ENCODE measurements at regions of chr4 and their contacts with region 1.

Region 1: DNA sequence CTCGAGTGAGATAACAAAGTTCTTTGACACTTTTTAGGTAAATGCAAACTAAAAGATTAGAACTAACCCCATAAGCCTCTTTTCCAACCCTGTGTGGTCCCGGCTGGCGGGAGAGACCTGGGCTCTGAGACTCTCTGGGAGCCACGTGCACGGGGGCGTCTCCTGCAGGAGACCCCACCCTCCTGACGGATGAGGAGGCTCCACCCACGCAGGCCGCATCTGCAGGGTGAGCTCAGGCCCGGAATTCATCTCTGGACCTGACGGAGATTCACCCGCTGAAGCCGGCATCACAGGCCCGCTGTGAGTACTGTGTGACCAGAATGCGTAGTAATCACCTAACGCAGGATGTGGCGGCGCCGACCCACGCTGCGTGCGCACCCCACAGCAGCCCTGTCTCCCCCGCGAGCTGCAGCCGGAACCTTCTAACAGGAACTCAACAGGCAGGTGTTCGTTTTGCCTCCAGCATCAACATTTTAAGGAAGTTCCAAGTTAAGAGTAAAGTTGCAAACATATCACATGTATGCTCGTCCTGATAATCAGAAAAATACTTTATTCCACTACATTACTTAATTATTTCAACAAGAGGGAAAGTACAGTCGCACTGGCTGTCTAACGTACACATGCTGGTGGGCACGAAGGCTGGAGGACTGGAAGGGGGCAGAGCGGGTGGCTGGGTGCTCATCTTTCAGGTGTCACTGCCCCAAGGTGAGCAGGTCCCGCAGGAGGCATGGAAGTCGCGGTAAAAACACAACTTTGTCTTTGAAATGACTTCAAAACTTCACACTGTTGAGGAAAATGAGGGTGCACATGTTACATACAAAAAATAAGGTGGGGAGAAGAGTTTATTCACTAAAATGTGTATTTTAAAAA is 44.5 kb downstream of the FGFRL1 start:
- DNase-seq: peak; percentile 95
- ATAC-seq: peak; percentile 97
- H3K4me3 ChIP-seq: peak overlapping the region; percentile 36 to 66 (median 51)
- H3K4me3 Mint-ChIP-seq: peak overlapping the region; percentile 70
- H3K27ac ChIP-seq: peak overlapping the region; percentile 73 to 76
- H3K27ac Mint-ChIP-seq: peak overlapping the region; percentile 84
- H3K4me1 ChIP-seq: peaks cover 11 to 17% of the 10 kb centered on the region in 2 donors
- H3K4me1 Mint-ChIP-seq: peaks cover 10% of the 10 kb centered on the region
- H3K27me3 ChIP-seq: peaks cover 0 to 19% (median 3%) of the 10 kb centered on the region in 4 experiments
- H3K27me3 Mint-ChIP-seq: peaks cover 10% of the 10 kb centered on the region
- CTCF ChIP-seq: no peak

Region 2: GRCh38 chr4:985123-985830 is 70.7 kb before region 1 on chr4:
- CTCF ChIA-PET with region 1: no interaction called
- POLR2A ChIA-PET with region 1: no interaction called
- intact Hi-C with region 1: no loop called
- DNase-seq: peak; percentile 58
- ATAC-seq: peak; percentile 37
- H3K4me3 ChIP-seq: peak overlapping the region in 4 of 5 experiments; percentile 26 to 46 (median 42)
- H3K4me3 Mint-ChIP-seq: peak overlapping the region; percentile 91
- H3K27ac ChIP-seq: no peak overlapping the region
- H3K27ac Mint-ChIP-seq: peak overlapping the region; percentile 26
- H3K4me1 ChIP-seq: peaks cover 25 to 26% of the 10 kb centered on the region in 2 donors
- H3K4me1 Mint-ChIP-seq: peaks cover 23% of the 10 kb centered on the region
- H3K27me3 ChIP-seq: no peaks in the 10 kb centered on the region
- H3K27me3 Mint-ChIP-seq: no peaks in the 10 kb centered on the region
- CTCF ChIP-seq: no peak

Region 3: GRCh38 chr4:1026115-1026514 is 29.8 kb before region 1 on chr4:
- CTCF ChIA-PET with region 1: no interaction called
- POLR2A ChIA-PET with region 1: no interaction called
- intact Hi-C with region 1: loop called (anchors 1 kb)
- DNase-seq: peak; percentile 84
- ATAC-seq: peak; percentile 78
- H3K4me3 ChIP-seq: no peak overlapping the region
- H3K4me3 Mint-ChIP-seq: peak overlapping the region; percentile 64
- H3K27ac ChIP-seq: peak overlapping the region in 1 of 2 donors; percentile 18
- H3K27ac Mint-ChIP-seq: peak overlapping the region; percentile 86
- H3K4me1 ChIP-seq: peaks cover 23 to 36% of the 10 kb centered on the region in 2 donors
- H3K4me1 Mint-ChIP-seq: peaks cover 30% of the 10 kb centered on the region
- H3K27me3 ChIP-seq: peaks cover 0 to 14% (median 0%) of the 10 kb centered on the region in 4 experiments
- H3K27me3 Mint-ChIP-seq: no peaks in the 10 kb centered on the region
- CTCF ChIP-seq: no peak

Region 4: GRCh38 chr4:1072830-1073446 is 17.0 kb after region 1 on chr4:
- CTCF ChIA-PET with region 1: interaction called, 3 read pairs
- POLR2A ChIA-PET with region 1: no interaction called
- intact Hi-C with region 1: loop called (anchors 2 kb)
- DNase-seq: peak; percentile 65
- ATAC-seq: peak; percentile 80
- H3K4me3 ChIP-seq: no peak overlapping the region
- H3K4me3 Mint-ChIP-seq: no peak overlapping the region
- H3K27ac ChIP-seq: no peak overlapping the region
- H3K27ac Mint-ChIP-seq: no peak overlapping the region
- H3K4me1 ChIP-seq: peaks cover 0 to 3% of the 10 kb centered on the region in 2 donors
- H3K4me1 Mint-ChIP-seq: peaks cover 11% of the 10 kb centered on the region
- H3K27me3 ChIP-seq: peaks cover 0 to 4% (median 0%) of the 10 kb centered on the region in 4 experiments
- H3K27me3 Mint-ChIP-seq: peaks cover 30% of the 10 kb centered on the region
- CTCF ChIP-seq: peak; percentile 79

Region 5: GRCh38 chr4:1099684-1100335 is 43.9 kb after region 1 on chr4:
- CTCF ChIA-PET with region 1: no interaction called
- POLR2A ChIA-PET with region 1: no interaction called
- intact Hi-C with region 1: no loop called
- DNase-seq: no peak
- ATAC-seq: no peak
- H3K4me3 ChIP-seq: no peak overlapping the region
- H3K4me3 Mint-ChIP-seq: no peak overlapping the region
- H3K27ac ChIP-seq: no peak overlapping the region
- H3K27ac Mint-ChIP-seq: no peak overlapping the region
- H3K4me1 ChIP-seq: no peaks in the 10 kb centered on the region
- H3K4me1 Mint-ChIP-seq: no peaks in the 10 kb centered on the region
- H3K27me3 ChIP-seq: no peaks in the 10 kb centered on the region
- H3K27me3 Mint-ChIP-seq: no peaks in the 10 kb centered on the region
- CTCF ChIP-seq: no peak